CD8-positive, alpha-beta T cell (primary cell): ENCODE measurements at regions of chr11 and their contacts with region 1.

Region 1: GRCh38 chr11:535519-536454 is at the start of gene HRAS:
- DNase-seq: peak; percentile 92 to 98 (median 97)
- ATAC-seq: peak; percentile 88
- H3K4me3 ChIP-seq: peak within 1 kb of the TSS; percentile 60 to 66
- H3K4me3 Mint-ChIP-seq: peak within 1 kb of the TSS; percentile 93
- H3K27ac ChIP-seq: peak within 1 kb of the TSS; percentile 73 to 89
- H3K27ac Mint-ChIP-seq: peak within 1 kb of the TSS; percentile 95
- H3K4me1 ChIP-seq: peaks cover 28% of the 10 kb centered on the region
- H3K4me1 Mint-ChIP-seq: peaks cover 24% of the 10 kb centered on the region
- H3K27me3 ChIP-seq: no peaks in the 10 kb centered on the region
- H3K27me3 Mint-ChIP-seq: no peaks in the 10 kb centered on the region
- CTCF ChIP-seq: no peak
- total RNA-seq, gene HRAS: 25.2 to 25.5 TPM

Region 2: DNA sequence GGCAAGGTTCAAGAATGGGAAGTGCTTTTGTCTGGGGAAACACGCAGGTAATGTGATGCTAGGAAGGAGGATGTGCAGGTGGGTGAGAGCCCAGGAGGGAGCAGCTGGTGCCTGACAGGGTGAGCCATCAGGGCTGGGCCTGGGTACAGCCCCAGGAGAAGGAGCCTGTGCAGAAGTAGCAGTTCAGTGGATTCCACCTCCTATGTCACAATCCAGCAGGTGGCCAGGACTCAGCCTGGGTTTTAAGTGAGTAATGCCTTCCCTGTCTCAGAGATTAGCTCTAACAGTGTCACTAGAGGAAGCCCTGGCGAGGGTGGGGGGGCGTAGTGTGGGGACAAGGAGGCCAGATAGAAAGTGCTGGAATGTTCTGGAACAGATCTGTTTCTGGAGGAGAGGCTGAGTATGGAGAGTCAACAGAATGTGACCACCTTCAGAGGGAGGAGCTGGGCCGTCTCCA is 320.2 kb before region 1 on chr11:
- CTCF ChIA-PET with region 1: no interaction called
- POLR2A ChIA-PET with region 1: no interaction called
- intact Hi-C with region 1: no loop called
- DNase-seq: peak in 1 of 9 experiments; percentile 4
- ATAC-seq: peak; percentile 30
- H3K4me3 ChIP-seq: no peak overlapping the region
- H3K4me3 Mint-ChIP-seq: no peak overlapping the region
- H3K27ac ChIP-seq: no peak overlapping the region
- H3K27ac Mint-ChIP-seq: peak overlapping the region; percentile 27
- H3K4me1 ChIP-seq: peaks cover 2% of the 10 kb centered on the region
- H3K4me1 Mint-ChIP-seq: peaks cover 4% of the 10 kb centered on the region
- H3K27me3 ChIP-seq: no peaks in the 10 kb centered on the region
- H3K27me3 Mint-ChIP-seq: no peaks in the 10 kb centered on the region
- CTCF ChIP-seq: no peak

Region 3: DNA sequence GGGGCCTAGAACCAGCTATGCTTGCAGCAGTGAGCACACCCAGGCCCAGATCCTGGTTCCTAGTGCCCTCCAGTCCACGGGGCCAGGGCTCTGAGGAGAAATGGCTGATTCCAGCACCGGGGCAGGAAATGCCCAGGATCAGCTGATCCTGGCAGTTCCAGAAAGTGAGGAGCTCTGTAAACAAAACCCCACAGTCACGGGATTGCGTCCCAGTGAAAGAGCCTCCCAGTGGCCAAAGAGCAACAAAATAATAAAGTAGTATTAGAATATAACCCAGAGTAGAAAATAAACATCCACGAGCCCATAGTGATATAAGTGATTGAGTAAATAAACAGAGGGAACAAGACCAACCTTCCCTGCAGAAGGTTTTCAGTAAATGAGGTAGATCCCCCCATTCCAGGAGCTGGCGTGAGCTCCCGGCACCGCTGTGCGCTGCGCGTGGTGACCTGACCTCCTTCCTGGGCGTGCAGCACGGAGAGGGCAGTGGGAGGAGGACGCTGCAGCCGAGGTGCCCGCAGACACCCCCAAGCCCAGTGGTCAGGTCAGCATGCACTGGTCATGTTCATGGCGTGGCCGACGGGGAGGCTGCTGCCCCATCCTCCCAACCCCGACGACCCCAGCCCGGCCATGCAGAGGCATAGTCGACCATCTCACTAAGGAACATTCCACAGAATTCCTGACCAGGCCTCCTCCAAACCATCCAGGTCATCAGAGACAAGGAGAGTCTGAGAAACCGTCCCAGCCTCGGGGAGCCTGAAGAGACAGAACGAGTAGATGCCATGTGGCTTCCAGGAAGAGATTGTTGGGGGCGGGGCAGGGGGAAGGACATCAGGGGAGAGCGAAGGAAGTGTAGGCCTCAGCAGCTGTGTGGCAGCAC is 65.9 kb before region 1 on chr11:
- CTCF ChIA-PET with region 1: no interaction called
- POLR2A ChIA-PET with region 1: no interaction called
- intact Hi-C with region 1: no loop called
- DNase-seq: no peak
- ATAC-seq: no peak
- H3K4me3 ChIP-seq: no peak overlapping the region
- H3K4me3 Mint-ChIP-seq: no peak overlapping the region
- H3K27ac ChIP-seq: no peak overlapping the region
- H3K27ac Mint-ChIP-seq: no peak overlapping the region
- H3K4me1 ChIP-seq: no peaks in the 10 kb centered on the region
- H3K4me1 Mint-ChIP-seq: no peaks in the 10 kb centered on the region
- H3K27me3 ChIP-seq: no peaks in the 10 kb centered on the region
- H3K27me3 Mint-ChIP-seq: no peaks in the 10 kb centered on the region
- CTCF ChIP-seq: no peak

Region 4: GRCh38 chr11:506238-506994 is 29.4 kb before region 1 on chr11:
- CTCF ChIA-PET with region 1: no interaction called
- POLR2A ChIA-PET with region 1: interaction called, 7 read pairs
- intact Hi-C with region 1: loop called (anchors 1 kb)
- DNase-seq: peak; percentile 93 to 99 (median 98)
- ATAC-seq: peak; percentile 67
- H3K4me3 ChIP-seq: peak overlapping the region; percentile 93 to 99
- H3K4me3 Mint-ChIP-seq: peak overlapping the region; percentile 97
- H3K27ac ChIP-seq: peak overlapping the region; percentile 99 to 100
- H3K27ac Mint-ChIP-seq: peak overlapping the region; percentile 99
- H3K4me1 ChIP-seq: peaks cover 36% of the 10 kb centered on the region
- H3K4me1 Mint-ChIP-seq: peaks cover 25% of the 10 kb centered on the region
- H3K27me3 ChIP-seq: no peaks in the 10 kb centered on the region
- H3K27me3 Mint-ChIP-seq: no peaks in the 10 kb centered on the region
- CTCF ChIP-seq: no peak

Region 5: GRCh38 chr11:554824-555472 is 19.2 kb after region 1 on chr11:
- CTCF ChIA-PET with region 1: interaction called, 3 read pairs
- POLR2A ChIA-PET with region 1: interaction called, 4 read pairs
- intact Hi-C with region 1: loop called (anchors 1 to 2 kb)
- DNase-seq: peak; percentile 54 to 90 (median 73)
- ATAC-seq: peak; percentile 81
- H3K4me3 ChIP-seq: peak overlapping the region; percentile 32 to 39
- H3K4me3 Mint-ChIP-seq: peak overlapping the region; percentile 56
- H3K27ac ChIP-seq: no peak overlapping the region
- H3K27ac Mint-ChIP-seq: no peak overlapping the region
- H3K4me1 ChIP-seq: peaks cover 15% of the 10 kb centered on the region
- H3K4me1 Mint-ChIP-seq: peaks cover 5% of the 10 kb centered on the region
- H3K27me3 ChIP-seq: no peaks in the 10 kb centered on the region
- H3K27me3 Mint-ChIP-seq: no peaks in the 10 kb centered on the region
- CTCF ChIP-seq: peak; percentile 51

Region 6: GRCh38 chr11:575996-576768 is 40.4 kb after region 1 on chr11 and contains the start of gene PHRF1:
- CTCF ChIA-PET with region 1: no interaction called
- POLR2A ChIA-PET with region 1: interaction called, 16 read pairs
- intact Hi-C with region 1: loop called in 1 of 2 experiments (anchors 1 kb)
- DNase-seq: peak; percentile 91 to 98 (median 96)
- ATAC-seq: peak; percentile 88
- H3K4me3 ChIP-seq: peak within 1 kb of the TSS; percentile 89 to 93
- H3K4me3 Mint-ChIP-seq: peak within 1 kb of the TSS; percentile 98
- H3K27ac ChIP-seq: peak within 1 kb of the TSS; percentile 84 to 95
- H3K27ac Mint-ChIP-seq: peak within 1 kb of the TSS; percentile 96
- H3K4me1 ChIP-seq: peaks cover 46% of the 10 kb centered on the region
- H3K4me1 Mint-ChIP-seq: peaks cover 54% of the 10 kb centered on the region
- H3K27me3 ChIP-seq: no peaks in the 10 kb centered on the region
- H3K27me3 Mint-ChIP-seq: peaks cover 2% of the 10 kb centered on the region
- CTCF ChIP-seq: no peak
- total RNA-seq, gene PHRF1: 43.2 to 44.9 TPM

Region 7: GRCh38 chr11:695538-696248 is 159.9 kb after region 1 on chr11 and contains the start of gene TMEM80:
- CTCF ChIA-PET with region 1: no interaction called
- POLR2A ChIA-PET with region 1: no interaction called
- intact Hi-C with region 1: loop called (anchors 2 to 5 kb)
- DNase-seq: peak; percentile 94 to 99 (median 97)
- ATAC-seq: peak; percentile 57
- H3K4me3 ChIP-seq: peak within 1 kb of the TSS; percentile 98
- H3K4me3 Mint-ChIP-seq: peak within 1 kb of the TSS; percentile 86
- H3K27ac ChIP-seq: peak within 1 kb of the TSS; percentile 94 to 100
- H3K27ac Mint-ChIP-seq: peak within 1 kb of the TSS; percentile 96
- H3K4me1 ChIP-seq: peaks cover 53% of the 10 kb centered on the region
- H3K4me1 Mint-ChIP-seq: peaks cover 55% of the 10 kb centered on the region
- H3K27me3 ChIP-seq: no peaks in the 10 kb centered on the region
- H3K27me3 Mint-ChIP-seq: no peaks in the 10 kb centered on the region
- CTCF ChIP-seq: no peak
- total RNA-seq, gene TMEM80: 24.8 to 25.2 TPM

Region 8: DNA sequence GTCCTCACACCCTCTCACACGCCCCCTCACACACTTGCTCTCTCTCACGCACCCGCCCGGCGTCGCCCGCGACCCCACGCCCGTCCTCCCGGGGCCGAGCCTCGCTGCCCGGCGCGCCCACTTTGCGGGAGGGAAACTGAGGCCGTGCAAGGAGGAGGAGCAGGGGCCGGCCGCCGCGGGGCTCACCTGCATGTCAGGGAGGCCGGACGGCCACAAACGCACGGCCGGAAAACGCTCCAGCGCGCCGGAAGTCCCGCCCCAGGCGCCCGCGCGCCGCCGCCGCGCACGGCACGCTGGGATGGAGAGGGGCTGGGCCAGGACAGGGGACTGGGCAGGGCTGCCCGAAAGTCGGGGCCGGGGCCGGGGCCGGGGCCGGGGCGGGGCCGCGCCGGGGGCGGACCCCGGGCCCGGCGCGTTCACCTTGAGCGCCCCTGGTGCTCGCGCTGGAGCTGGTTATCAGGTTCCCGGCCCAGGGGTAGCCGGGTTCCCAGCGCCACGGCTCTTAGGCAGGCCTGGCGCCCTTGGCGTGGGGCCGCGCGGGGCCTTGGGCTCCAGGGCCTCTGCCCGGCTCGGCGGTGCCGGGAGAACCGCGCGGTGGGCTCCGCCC is 374.9 kb after region 1 on chr11 and contains the start of gene CHID1:
- CTCF ChIA-PET with region 1: no interaction called
- POLR2A ChIA-PET with region 1: interaction called, 3 read pairs
- intact Hi-C with region 1: loop called in 1 of 2 experiments (anchors 5 kb)
- DNase-seq: peak; percentile 51 to 89 (median 80)
- ATAC-seq: peak; percentile 94
- H3K4me3 ChIP-seq: peak within 1 kb of the TSS; percentile 63 to 92
- H3K4me3 Mint-ChIP-seq: peak within 1 kb of the TSS; percentile 91
- H3K27ac ChIP-seq: peak within 1 kb of the TSS; percentile 28 to 47
- H3K27ac Mint-ChIP-seq: peak within 1 kb of the TSS; percentile 71
- H3K4me1 ChIP-seq: peaks cover 16% of the 10 kb centered on the region
- H3K4me1 Mint-ChIP-seq: peaks cover 23% of the 10 kb centered on the region
- H3K27me3 ChIP-seq: no peaks in the 10 kb centered on the region
- H3K27me3 Mint-ChIP-seq: no peaks in the 10 kb centered on the region
- CTCF ChIP-seq: no peak
- total RNA-seq, gene CHID1: 16.0 to 18.1 TPM